Naive thymus-derived CD4-positive, alpha-beta T cell (primary cell): ENCODE measurements at regions of chr11 and their contacts with region 1.

Region 1: GRCh38 chr11:79708300-79708932 is 267.6 kb upstream of the TENM4 start:
- DNase-seq: no peak
- ATAC-seq: no peak
- H3K4me3 ChIP-seq: no peak overlapping the region
- H3K4me3 Mint-ChIP-seq: no peak overlapping the region
- H3K27ac ChIP-seq: no peak overlapping the region
- H3K27ac Mint-ChIP-seq: no peak overlapping the region
- H3K4me1 ChIP-seq: no peaks in the 10 kb centered on the region
- H3K4me1 Mint-ChIP-seq: no peaks in the 10 kb centered on the region
- H3K27me3 ChIP-seq: no peaks in the 10 kb centered on the region
- H3K27me3 Mint-ChIP-seq: no peaks in the 10 kb centered on the region

Region 2: GRCh38 chr11:79963856-79964645 is 255.6 kb after region 1 on chr11:
- CTCF ChIA-PET with region 1: no interaction called
- POLR2A ChIA-PET with region 1: no interaction called
- intact Hi-C with region 1: no loop called
- DNase-seq: no peak
- ATAC-seq: no peak
- H3K4me3 ChIP-seq: no peak overlapping the region
- H3K4me3 Mint-ChIP-seq: no peak overlapping the region
- H3K27ac ChIP-seq: no peak overlapping the region
- H3K27ac Mint-ChIP-seq: no peak overlapping the region
- H3K4me1 ChIP-seq: no peaks in the 10 kb centered on the region
- H3K4me1 Mint-ChIP-seq: no peaks in the 10 kb centered on the region
- H3K27me3 ChIP-seq: no peaks in the 10 kb centered on the region
- H3K27me3 Mint-ChIP-seq: peaks cover 0 to 5% (median 0%) of the 10 kb centered on the region in 5 donors

Region 3: DNA sequence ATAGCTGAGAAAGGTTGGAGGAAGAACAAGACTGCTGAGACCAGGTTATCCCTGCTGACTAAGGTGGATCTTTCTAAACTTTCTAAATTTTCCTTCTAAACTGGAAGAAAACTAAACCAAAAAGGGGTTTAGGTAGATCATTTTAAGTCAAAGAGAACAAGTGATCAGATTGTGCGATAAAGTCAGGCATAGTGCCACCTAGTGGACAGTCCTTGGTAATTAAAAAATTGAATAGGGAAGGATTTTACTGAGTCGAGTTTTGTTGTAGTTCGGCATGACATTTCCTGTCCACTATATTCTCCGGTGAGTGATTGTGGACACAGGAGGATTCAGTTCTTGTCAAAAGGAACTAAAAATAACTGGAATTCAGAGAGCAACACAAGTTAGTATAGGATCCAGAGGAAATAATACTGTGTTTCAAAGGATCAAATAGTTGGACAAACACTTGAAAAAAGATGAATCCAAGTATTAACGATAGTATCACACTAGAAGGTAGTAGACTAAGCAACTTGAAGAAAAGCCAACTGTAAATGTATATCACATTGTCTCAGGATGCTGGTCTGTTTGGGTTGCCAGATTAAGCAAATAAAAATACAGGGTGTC is 1788.9 kb after region 1 on chr11:
- CTCF ChIA-PET with region 1: no interaction called
- POLR2A ChIA-PET with region 1: no interaction called
- intact Hi-C with region 1: loop called in 1 of 2 experiments (anchors 5 kb)
- DNase-seq: peak in 2 of 9 donors; percentile 2 to 8
- ATAC-seq: no peak
- H3K4me3 ChIP-seq: no peak overlapping the region
- H3K4me3 Mint-ChIP-seq: no peak overlapping the region
- H3K27ac ChIP-seq: no peak overlapping the region
- H3K27ac Mint-ChIP-seq: no peak overlapping the region
- H3K4me1 ChIP-seq: no peaks in the 10 kb centered on the region
- H3K4me1 Mint-ChIP-seq: no peaks in the 10 kb centered on the region
- H3K27me3 ChIP-seq: no peaks in the 10 kb centered on the region
- H3K27me3 Mint-ChIP-seq: peaks cover 0 to 13% (median 5%) of the 10 kb centered on the region in 5 donors